HCT116 (cell line): ENCODE measurements at regions of chr1 and their contacts with region 1.

Region 1: DNA sequence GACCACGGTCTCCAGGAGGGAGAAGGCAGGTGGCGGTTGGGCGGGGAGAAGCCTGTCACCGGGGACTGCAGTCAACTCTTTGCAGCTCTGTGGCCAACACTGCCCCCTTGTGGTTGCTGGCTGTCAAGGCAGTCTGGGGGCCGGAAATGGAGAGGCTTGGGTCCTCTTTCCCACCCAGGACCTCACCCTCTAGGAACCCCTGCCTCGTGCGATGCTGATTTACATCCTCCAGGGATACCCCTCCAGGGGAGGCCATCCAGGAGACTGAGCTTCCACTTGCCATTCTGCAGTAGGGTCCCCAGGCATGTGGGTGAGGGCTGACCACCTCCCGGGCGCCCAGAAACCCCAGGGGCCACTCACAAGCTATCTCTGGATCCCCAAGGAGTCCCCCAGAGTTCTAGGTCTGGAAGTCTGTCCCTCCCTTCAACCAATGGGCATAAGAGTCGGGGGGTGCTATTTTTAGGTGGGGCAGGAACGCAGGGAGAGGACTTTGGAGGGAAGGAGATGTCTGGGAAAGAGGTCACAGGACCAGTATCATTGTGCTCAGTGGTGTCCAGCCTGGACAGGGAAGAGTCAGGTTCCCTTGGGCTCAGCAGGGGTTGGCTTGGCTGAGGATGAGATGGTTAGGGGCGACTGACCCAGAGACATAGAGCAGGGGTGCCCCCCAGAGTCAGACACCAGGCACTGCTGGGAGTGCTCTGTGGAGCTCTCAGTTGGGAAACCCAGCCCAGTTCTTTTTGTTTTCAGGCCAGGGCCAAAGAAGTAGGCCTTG is 7.1 kb upstream of the GPR61 start:
- DNase-seq: peak; percentile 47
- ATAC-seq: peak; percentile 92
- H3K4me3 ChIP-seq: no peak overlapping the region
- H3K27ac ChIP-seq: peak overlapping the region; percentile 21; the same call in 1 of the 2 replicates
- H3K4me1 ChIP-seq: peaks cover 4 to 14% of the 10 kb centered on the region in 2 experiments; a peak in 3 of 4 replicates
- H3K27me3 ChIP-seq: no peaks in the 10 kb centered on the region; the same call in 1 of the 2 replicates
- CTCF ChIP-seq: peak; percentile 85 to 97 (median 93)
- POLR2A ChIP-seq: no peak
- RAD21 ChIP-seq: peak; percentile 91

Region 2: GRCh38 chr1:108871050-108871724 is 661.4 kb before region 1 on chr1:
- CTCF ChIA-PET with region 1: no interaction called
- POLR2A ChIA-PET with region 1: no interaction called
- RAD21 ChIA-PET with region 1: no interaction called
- intact Hi-C with region 1: no loop called
- DNase-seq: no peak
- ATAC-seq: no peak
- H3K4me3 ChIP-seq: no peak overlapping the region
- H3K27ac ChIP-seq: no peak overlapping the region
- H3K4me1 ChIP-seq: peaks cover under 1 to 20% of the 10 kb centered on the region in 2 experiments
- H3K27me3 ChIP-seq: no peaks in the 10 kb centered on the region
- CTCF ChIP-seq: no peak
- POLR2A ChIP-seq: no peak
- RAD21 ChIP-seq: no peak

Region 3: DNA sequence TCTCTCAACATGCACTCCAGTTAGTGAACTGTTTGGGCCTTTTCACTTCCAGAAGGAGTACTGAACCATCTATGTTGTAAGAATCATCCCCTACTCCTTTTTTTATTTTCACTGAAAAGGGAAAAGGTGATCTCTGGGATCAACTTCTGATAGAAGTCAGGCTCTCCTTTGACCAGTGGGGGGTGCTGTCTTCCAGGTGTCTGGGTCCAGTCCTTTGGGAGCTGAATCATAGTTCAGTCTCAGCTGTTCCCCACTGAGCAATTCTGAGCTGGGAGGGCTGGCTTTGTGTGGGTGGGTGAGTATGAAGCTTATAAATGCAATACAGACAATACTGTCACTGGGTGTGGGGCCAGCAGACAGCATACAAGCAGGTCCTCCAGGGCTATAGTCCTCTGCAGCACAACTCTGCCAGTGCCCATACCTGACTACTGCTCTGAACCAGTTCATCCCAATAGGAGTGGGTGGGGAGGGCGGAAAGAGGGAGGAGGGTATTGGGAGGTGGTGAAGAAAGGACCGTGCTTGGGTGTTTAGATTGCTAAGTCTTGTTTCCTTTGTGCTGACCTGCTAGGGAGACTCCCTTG is 331.3 kb before region 1 on chr1:
- CTCF ChIA-PET with region 1: interaction called, 4 read pairs
- POLR2A ChIA-PET with region 1: no interaction called
- RAD21 ChIA-PET with region 1: no interaction called
- intact Hi-C with region 1: loop called (anchors 10 kb)
- DNase-seq: no peak
- ATAC-seq: peak; percentile 59
- H3K4me3 ChIP-seq: no peak overlapping the region
- H3K27ac ChIP-seq: no peak overlapping the region
- H3K4me1 ChIP-seq: peaks cover 18 to 35% of the 10 kb centered on the region in 2 experiments
- H3K27me3 ChIP-seq: no peaks in the 10 kb centered on the region
- CTCF ChIP-seq: peak; percentile 71 to 91 (median 89); a peak in 5 of 6 replicates
- POLR2A ChIP-seq: no peak
- RAD21 ChIP-seq: peak; percentile 81

Region 4: GRCh38 chr1:109277434-109278204 is 254.9 kb before region 1 on chr1:
- CTCF ChIA-PET with region 1: interaction called, 17 read pairs
- POLR2A ChIA-PET with region 1: no interaction called
- RAD21 ChIA-PET with region 1: no interaction called
- intact Hi-C with region 1: loop called (anchors 2 kb)
- DNase-seq: peak; percentile 69
- ATAC-seq: peak; percentile 80
- H3K4me3 ChIP-seq: no peak overlapping the region
- H3K27ac ChIP-seq: peak overlapping the region; percentile 24; the same call in 1 of the 2 replicates
- H3K4me1 ChIP-seq: peaks cover 38 to 53% of the 10 kb centered on the region in 2 experiments
- H3K27me3 ChIP-seq: no peaks in the 10 kb centered on the region
- CTCF ChIP-seq: peak; percentile 77 to 93 (median 88)
- POLR2A ChIP-seq: no peak
- RAD21 ChIP-seq: peak; percentile 82

Region 5: DNA sequence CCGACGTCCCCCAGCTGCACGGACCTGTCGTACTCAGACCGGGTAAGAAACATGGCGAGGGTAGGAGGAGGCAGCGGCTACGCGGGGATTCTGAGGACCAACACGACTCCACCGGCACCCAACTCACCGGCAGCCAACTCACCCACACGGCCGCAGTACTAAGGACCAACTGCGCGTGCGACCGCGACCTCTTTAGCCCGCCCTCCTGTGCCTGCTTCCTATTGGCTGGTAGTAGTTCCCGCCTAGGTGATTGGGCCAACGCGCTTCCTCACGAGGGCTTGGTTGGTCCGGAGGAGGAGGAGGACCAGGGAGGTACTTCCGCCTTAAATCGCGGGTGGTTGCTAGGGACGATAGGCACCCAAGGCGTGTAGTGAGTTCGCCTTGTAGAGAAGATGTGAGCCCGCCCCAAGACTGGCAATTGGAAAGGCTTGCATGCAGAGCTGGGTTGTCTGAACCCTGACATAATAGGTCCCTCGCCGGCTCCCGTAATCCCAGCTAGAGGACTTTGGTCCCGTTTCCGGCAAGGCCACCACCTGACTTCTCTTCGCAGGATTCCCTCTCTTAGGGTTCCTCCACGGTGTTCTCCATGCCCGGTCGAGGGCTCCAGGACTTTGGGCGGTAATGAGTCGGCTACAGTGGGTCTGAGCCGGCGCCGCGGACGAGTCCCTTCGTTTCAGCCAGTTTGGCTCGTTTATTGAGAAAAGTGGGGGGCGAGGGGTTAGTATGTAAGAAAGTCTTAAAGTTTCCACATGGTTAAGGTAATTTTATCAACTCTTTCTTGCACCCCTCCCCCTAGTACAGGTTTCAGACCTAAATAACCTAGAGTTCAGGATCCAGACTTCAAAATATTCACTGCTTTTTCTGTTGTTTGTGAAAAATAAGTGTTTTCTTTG is 106.0 kb before region 1 on chr1 and contains the start of gene PSMA5:
- CTCF ChIA-PET with region 1: interaction called, 10 read pairs
- POLR2A ChIA-PET with region 1: no interaction called
- RAD21 ChIA-PET with region 1: no interaction called
- intact Hi-C with region 1: loop called (anchors 1 kb)
- DNase-seq: peak; percentile 99
- ATAC-seq: peak; percentile 96
- H3K4me3 ChIP-seq: peak within 1 kb of the TSS; percentile 57 to 82
- H3K27ac ChIP-seq: peak within 1 kb of the TSS; percentile 68
- H3K4me1 ChIP-seq: peaks cover 7 to 29% of the 10 kb centered on the region in 2 experiments
- H3K27me3 ChIP-seq: no peaks in the 10 kb centered on the region
- CTCF ChIP-seq: no peak
- POLR2A ChIP-seq: no peak
- RAD21 ChIP-seq: no peak
- total RNA-seq, gene PSMA5: 169 TPM

Region 6: GRCh38 chr1:109466452-109467300 is 65.9 kb before region 1 on chr1 and contains the start of gene SYPL2:
- CTCF ChIA-PET with region 1: no interaction called
- POLR2A ChIA-PET with region 1: no interaction called
- RAD21 ChIA-PET with region 1: no interaction called
- intact Hi-C with region 1: no loop called
- DNase-seq: no peak
- ATAC-seq: peak; percentile 82
- H3K4me3 ChIP-seq: peak within 1 kb of the TSS; percentile 46 to 54
- H3K27ac ChIP-seq: no peak within 1 kb of the TSS
- H3K4me1 ChIP-seq: peaks cover 0 to 10% of the 10 kb centered on the region in 2 experiments; a peak in 1 of 4 replicates
- H3K27me3 ChIP-seq: peaks cover 25% of the 10 kb centered on the region
- CTCF ChIP-seq: no peak
- POLR2A ChIP-seq: no peak
- RAD21 ChIP-seq: no peak
- total RNA-seq, gene SYPL2: 1.3 TPM

Region 7: GRCh38 chr1:109499661-109500536 is 32.7 kb before region 1 on chr1:
- CTCF ChIA-PET with region 1: interaction called, 146 read pairs
- POLR2A ChIA-PET with region 1: interaction called, 4 read pairs
- RAD21 ChIA-PET with region 1: interaction called, 4 to 6 read pairs
- intact Hi-C with region 1: no loop called
- DNase-seq: no peak
- ATAC-seq: peak; percentile 80
- H3K4me3 ChIP-seq: no peak overlapping the region
- H3K27ac ChIP-seq: no peak overlapping the region
- H3K4me1 ChIP-seq: peaks cover 2 to 7% of the 10 kb centered on the region in 2 experiments; a peak in 2 of 4 replicates
- H3K27me3 ChIP-seq: no peaks in the 10 kb centered on the region
- CTCF ChIP-seq: peak; percentile 42 to 67 (median 66); a peak in 5 of 6 replicates
- POLR2A ChIP-seq: no peak
- RAD21 ChIP-seq: peak; percentile 42